Psoas muscle (tissue), 8 donors: ENCODE measurements at regions of chr2 and their contacts with region 1.

Region 1: GRCh38 chr2:180823546-180824141 is 156.8 kb upstream of the UBE2E3 start:
- DNase-seq: no peak
- ATAC-seq: no peak
- H3K4me3 ChIP-seq: no peak overlapping the region
- H3K27ac ChIP-seq: no peak overlapping the region
- H3K4me1 ChIP-seq: no peaks in the 10 kb centered on the region
- H3K27me3 ChIP-seq: no peaks in the 10 kb centered on the region
- CTCF ChIP-seq: no peak

Region 2: DNA sequence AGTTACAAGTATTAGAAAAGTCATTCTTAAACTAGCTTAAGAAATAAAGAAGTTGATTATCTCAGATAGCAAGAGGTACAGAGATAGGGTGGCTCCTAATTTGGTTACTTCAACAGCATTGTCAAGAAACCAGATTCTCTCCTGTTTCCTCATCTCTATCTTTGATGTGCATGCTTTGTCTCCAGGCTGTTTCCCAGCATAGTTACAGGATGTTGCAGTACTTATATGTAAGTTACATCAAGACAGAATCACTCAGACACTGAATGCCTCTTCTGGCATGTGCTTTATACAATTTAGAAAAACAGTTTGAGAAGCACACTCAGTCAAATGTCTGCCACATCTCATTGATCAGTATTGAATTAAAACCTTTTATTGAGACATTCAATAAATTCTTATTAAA is 32.8 kb before region 1 on chr2:
- intact Hi-C with region 1: loop called in 1 of 2 experiments (anchors 2 kb)
- DNase-seq: no peak
- ATAC-seq: no peak
- H3K4me3 ChIP-seq: no peak overlapping the region
- H3K27ac ChIP-seq: no peak overlapping the region
- H3K4me1 ChIP-seq: no peaks in the 10 kb centered on the region
- H3K27me3 ChIP-seq: no peaks in the 10 kb centered on the region
- CTCF ChIP-seq: no peak